AG04449 (cell line): ENCODE measurements at regions of chr1 and their contacts with region 1.

Region 1: GRCh38 chr1:112501810-112502641 is 6.7 kb upstream of the WNT2B start:
- DNase-seq: no peak
- H3K4me3 ChIP-seq: peak overlapping the region; percentile 52
- CTCF ChIP-seq: peak; percentile 94

Region 2: DNA sequence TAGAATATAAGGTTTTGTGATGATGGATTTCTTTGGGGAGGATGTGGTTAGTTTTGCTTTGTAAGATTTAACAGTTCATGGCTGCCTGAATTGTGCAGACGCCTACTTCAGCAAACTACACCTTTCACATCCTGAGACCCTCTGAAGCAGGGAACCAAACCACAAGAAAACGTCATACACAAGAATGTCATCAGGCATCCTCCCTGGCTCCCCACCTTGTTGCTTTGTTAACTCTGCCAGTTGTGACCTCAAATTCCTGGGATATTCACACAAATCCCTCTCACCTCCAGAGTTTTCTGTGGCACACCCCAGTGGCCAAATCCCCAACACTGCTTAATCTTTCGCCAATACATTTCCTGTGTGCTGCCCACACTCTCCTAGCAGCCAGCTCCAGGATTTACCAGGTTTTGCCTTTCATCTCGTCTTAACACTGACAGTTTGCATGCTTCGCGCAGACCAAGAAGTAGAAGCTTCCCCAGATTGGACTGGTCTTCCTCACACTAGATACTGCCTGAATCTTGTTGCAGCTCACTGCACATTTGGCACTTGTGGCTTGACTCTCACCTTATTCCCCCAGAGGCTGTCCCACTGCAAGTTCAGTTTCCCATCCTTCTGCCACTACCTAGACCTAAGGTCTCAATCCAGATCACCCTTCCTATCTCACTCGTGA is 157.1 kb before region 1 on chr1:
- CTCF ChIA-PET with region 1: no interaction called
- POLR2A ChIA-PET with region 1: no interaction called
- DNase-seq: no peak
- H3K4me3 ChIP-seq: no peak overlapping the region
- CTCF ChIP-seq: no peak

Region 3: GRCh38 chr1:112390775-112391602 is 111.0 kb before region 1 on chr1:
- CTCF ChIA-PET with region 1: interaction called, 59 read pairs
- POLR2A ChIA-PET with region 1: interaction called, 3 read pairs
- DNase-seq: peak; percentile 67
- H3K4me3 ChIP-seq: peak overlapping the region; percentile 50
- CTCF ChIP-seq: peak; percentile 79

Region 4: DNA sequence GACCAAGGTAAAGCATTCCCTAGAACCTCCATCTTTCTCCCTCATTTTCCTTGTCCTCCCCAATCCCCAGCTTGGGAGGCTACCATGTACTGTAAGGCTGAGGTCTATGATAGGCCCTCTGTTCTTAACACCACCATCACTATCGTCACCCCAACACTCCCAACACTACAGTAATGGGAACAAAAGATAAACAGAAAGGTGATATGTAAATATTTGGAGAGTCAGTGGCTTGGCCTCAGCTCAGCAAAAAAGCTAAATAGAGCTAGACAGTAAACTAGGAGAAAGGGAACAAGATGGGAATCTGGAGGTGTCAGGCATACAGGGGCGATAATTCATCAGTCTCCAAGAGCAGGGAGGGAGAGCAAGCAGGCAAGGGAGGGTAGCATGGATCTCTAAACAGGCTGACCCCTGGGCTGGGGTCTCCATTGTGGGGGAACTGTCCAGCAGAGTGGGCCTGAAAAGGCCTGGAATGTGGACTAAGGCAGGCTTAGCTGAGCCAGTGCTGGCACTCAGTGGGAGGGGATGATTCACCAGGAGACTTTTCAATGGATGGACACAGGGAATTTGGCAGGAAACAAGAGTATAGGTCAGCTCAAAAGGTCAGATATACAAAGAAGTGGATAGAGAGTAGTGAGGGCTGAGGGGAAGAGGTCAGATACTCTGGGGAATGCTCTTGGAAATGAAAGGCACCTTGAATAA is 13.4 kb after region 1 on chr1:
- CTCF ChIA-PET with region 1: interaction called, 25 read pairs
- POLR2A ChIA-PET with region 1: interaction called, 3 read pairs
- DNase-seq: no peak
- H3K4me3 ChIP-seq: no peak overlapping the region
- CTCF ChIP-seq: no peak

Region 5: DNA sequence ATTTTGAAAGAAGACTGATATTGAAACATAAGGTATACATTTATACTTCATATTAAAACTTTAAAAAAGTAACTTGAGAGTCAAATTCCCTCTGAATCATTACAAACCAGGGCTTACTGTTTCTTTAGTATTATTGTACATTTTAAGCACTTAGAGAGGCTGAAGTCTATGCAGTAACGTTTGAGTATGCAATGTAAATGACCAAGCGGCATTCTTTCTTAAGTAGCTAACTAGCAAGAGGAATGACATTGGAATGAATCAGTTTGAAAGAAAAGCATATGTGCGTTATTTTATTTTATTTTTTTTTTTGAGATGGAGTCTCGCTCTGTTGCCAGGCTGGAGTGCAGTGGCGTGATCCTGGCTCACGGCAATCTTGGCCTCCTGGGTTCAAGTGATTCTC is 31.0 kb after region 1 on chr1:
- CTCF ChIA-PET with region 1: interaction called, 14 read pairs
- POLR2A ChIA-PET with region 1: interaction called, 4 read pairs
- DNase-seq: peak; percentile 92
- H3K4me3 ChIP-seq: no peak overlapping the region
- CTCF ChIP-seq: no peak

Region 6: DNA sequence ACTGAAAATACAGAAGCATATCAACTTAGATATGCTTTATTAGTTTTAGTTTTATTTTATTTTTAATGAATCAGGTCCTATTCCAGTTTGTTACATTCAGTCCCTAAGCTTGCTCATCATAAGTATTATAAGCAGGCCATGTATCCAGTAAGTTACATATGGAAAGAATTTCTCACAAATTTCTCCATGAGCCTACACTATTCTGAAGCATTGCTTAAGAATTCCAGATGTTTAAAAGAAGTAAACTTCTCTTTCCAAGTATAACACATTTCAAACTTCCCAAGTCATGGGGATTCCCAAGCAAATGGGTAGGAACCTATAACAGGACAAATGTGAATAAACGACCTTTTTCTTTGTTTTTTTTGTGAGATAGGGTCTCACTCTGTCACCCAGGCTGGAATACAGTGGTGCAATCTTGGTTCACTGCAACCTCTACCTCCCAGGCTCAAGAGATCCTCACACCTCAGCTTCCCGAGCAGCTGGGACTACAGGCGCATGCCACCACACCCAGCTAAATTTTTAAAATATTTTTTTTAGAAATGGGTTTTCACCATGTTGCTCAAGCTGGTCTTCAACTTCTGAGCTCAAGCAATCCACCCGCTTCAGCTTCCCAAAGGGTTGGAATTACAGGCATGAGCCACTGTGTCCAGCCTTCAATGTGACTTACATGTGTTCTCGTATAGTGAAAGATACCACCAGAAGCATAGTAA is 77.9 kb after region 1 on chr1:
- CTCF ChIA-PET with region 1: interaction called, 14 read pairs
- POLR2A ChIA-PET with region 1: no interaction called
- DNase-seq: peak; percentile 36
- H3K4me3 ChIP-seq: no peak overlapping the region
- CTCF ChIP-seq: no peak

Region 7: GRCh38 chr1:112619520-112620376 is 117.7 kb after region 1 on chr1 and contains the start of gene CAPZA1:
- CTCF ChIA-PET with region 1: interaction called, 228 read pairs
- POLR2A ChIA-PET with region 1: interaction called, 3 read pairs
- DNase-seq: peak; percentile 59
- H3K4me3 ChIP-seq: peak within 1 kb of the TSS; percentile 100
- CTCF ChIP-seq: no peak

Region 8: GRCh38 chr1:112706908-112707663 is 205.1 kb after region 1 on chr1 and contains the start of gene RHOC:
- CTCF ChIA-PET with region 1: interaction called, 30 read pairs
- POLR2A ChIA-PET with region 1: no interaction called
- DNase-seq: peak; percentile 34
- H3K4me3 ChIP-seq: peak within 1 kb of the TSS; percentile 88
- CTCF ChIP-seq: peak; percentile 98